ENCODE measurements at regions of chr11 and their contacts with region 1.

Region 1: DNA sequence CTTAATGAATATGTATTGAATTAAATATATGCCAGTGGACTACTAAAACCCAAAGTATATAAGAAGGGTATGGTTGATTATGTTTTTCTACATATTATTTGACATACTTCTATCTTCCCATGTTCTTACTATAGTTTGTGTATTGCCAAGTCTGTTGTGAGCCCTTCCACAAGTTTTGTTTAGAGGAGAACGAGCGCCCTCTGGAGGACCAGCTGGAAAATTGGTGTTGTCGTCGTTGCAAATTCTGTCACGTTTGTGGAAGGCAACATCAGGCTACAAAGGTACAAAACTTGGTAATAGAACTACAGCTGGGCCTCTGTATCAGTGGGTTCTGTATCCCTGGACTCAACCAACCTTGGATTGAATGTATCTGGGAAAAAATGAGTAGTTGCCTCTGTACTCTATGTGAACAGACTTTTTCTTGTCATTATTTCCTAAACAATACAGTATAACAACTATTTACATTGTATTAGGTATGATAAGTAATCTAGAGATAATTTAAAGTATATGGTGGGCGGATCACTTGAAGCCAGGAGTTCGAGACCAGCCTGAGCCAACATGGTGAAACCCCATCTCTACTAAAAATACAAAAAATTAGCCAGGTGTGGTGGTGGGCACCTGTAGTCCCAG is 38.7 kb upstream of the TTC36 start:
- DNase-seq: peak; percentile 65
- H3K4me3 ChIP-seq: no peak overlapping the region
- H3K27ac ChIP-seq: no peak overlapping the region
- H3K27me3 ChIP-seq: no peaks in the 10 kb centered on the region
- CTCF ChIP-seq: peak; percentile 90

Region 2: GRCh38 chr11:118380571-118380970 is 108.0 kb before region 1 on chr11:
- CTCF ChIA-PET with region 1: interaction called, 11 read pairs
- POLR2A ChIA-PET with region 1: no interaction called
- DNase-seq: no peak
- H3K4me3 ChIP-seq: no peak overlapping the region
- H3K27ac ChIP-seq: no peak overlapping the region
- H3K27me3 ChIP-seq: no peaks in the 10 kb centered on the region
- CTCF ChIP-seq: no peak

Region 3: DNA sequence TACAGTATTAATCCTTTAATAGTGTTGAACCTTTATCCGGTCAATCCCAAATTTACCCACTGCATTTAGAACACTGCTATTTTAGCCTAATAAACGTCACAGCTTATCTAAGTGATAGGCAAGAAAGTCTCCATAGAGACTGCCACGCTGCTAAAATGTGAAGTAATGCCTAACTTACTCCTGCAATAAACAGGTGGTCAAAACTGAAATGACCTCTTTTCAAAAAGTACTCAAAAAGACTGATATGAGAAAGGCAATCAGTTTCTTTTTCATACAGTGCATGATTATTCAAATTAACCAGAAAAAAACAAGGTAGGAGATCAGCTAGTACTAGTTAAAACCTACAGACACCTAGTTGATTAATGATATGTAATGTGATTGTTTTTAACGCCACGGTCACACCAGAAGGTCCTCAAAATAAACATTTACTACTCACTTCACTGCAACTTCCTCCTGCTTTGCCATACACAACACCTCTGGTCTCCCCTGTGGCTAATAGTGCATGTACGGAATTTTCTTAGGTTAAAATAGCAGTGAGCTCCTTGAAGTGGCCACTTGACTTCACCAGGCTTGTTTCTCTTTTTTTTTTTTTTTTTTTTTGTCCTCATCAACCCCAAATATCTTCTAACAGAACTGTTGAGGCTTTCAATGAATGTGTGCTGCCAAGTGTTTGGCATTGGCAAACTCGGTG is 78.4 kb before region 1 on chr11:
- CTCF ChIA-PET with region 1: interaction called, 16 read pairs
- POLR2A ChIA-PET with region 1: interaction called, 3 read pairs
- DNase-seq: no peak
- H3K4me3 ChIP-seq: no peak overlapping the region
- H3K27ac ChIP-seq: no peak overlapping the region
- H3K27me3 ChIP-seq: no peaks in the 10 kb centered on the region
- CTCF ChIP-seq: no peak

Region 4: DNA sequence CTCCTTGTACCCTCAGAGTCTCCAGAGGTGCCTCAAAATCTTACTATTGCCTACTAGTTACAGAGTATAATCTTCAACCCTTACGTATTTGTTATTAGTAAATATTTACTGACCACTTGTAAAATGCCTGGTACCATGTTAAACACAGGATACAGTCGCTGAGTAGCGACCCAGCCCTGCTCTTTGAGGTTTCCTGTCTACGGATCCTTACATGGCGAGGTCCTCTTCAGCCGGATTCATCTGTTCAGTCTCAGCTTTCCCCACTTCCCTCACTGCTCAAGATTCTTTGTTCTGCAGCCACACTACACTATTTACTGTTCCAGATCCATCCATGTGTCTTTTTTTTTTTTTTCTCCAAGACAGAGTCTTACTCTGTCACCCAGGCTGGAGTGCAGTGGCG is 25.5 kb after region 1 on chr11:
- CTCF ChIA-PET with region 1: interaction called, 13 read pairs
- POLR2A ChIA-PET with region 1: no interaction called
- DNase-seq: no peak
- H3K4me3 ChIP-seq: no peak overlapping the region
- H3K27ac ChIP-seq: no peak overlapping the region
- H3K27me3 ChIP-seq: no peaks in the 10 kb centered on the region
- CTCF ChIP-seq: no peak

Region 5: GRCh38 chr11:118533662-118534363 is 45.2 kb after region 1 on chr11:
- CTCF ChIA-PET with region 1: no interaction called
- POLR2A ChIA-PET with region 1: no interaction called
- DNase-seq: no peak
- H3K4me3 ChIP-seq: no peak overlapping the region
- H3K27ac ChIP-seq: no peak overlapping the region
- H3K27me3 ChIP-seq: no peaks in the 10 kb centered on the region
- CTCF ChIP-seq: no peak

Region 6: GRCh38 chr11:118565051-118565450 is 76.5 kb after region 1 on chr11:
- CTCF ChIA-PET with region 1: no interaction called
- POLR2A ChIA-PET with region 1: no interaction called
- DNase-seq: no peak
- H3K4me3 ChIP-seq: peak overlapping the region; percentile 64
- H3K27ac ChIP-seq: no peak overlapping the region
- H3K27me3 ChIP-seq: no peaks in the 10 kb centered on the region
- CTCF ChIP-seq: no peak